ENCODE measurements at regions of chr12 and their contacts with region 1.

Region 1: DNA sequence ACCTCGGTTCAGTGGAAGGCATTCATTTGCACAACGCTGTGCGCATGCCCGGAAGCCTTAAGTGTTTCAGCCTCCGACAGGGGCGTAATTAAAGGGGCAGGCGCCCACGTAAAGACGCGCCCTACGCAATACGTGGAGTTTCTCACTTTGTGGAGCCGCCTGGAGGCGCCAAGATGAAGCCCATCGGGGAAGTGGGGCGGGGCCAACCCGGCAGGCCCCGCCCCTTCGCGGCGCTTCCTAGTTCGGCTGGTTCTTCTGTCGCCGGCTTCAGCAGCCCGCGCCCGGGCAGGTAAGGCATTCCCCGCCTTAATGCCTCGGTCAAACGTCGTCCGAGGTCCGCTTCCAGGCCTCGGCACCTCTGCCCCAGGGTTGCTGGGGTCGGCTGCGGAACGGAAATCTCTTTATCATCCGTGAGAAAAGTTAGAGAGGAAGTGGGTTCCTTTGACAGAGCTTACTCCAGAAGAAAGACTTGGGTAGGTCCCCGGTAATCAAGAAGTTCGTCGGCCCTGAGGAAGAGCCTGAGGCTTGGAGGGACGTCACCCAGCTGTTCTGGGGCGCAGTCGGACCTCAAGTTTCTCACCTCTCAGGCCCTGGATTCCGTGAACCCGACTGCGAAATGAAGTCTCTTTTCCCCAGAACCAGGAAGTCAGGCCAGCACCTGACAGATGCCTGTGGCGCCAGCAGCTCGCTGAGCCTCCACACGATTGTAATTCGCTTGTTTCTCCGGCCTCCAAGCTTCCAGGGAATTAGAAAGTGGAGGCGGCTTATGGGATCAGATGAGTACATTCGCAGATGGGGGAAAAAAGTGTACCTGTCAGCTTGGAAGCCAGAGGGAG is at the starts of genes IRAK4 and PUS7L:
- DNase-seq: peak; percentile 97
- ATAC-seq: peak; percentile 96
- H3K4me3 Mint-ChIP-seq: peak within 1 kb of the TSS; percentile 97
- H3K27ac Mint-ChIP-seq: peak within 1 kb of the TSS; percentile 99
- H3K4me1 Mint-ChIP-seq: peaks cover 64% of the 10 kb centered on the region
- H3K27me3 Mint-ChIP-seq: no peaks in the 10 kb centered on the region
- total RNA-seq, gene IRAK4: 32.9 to 37.7 TPM
- total RNA-seq, gene PUS7L: 16.8 to 19.8 TPM

Region 2: GRCh38 chr12:43805860-43806736 is 47.2 kb after region 1 on chr12 and contains the start of gene TWF1:
- CTCF ChIA-PET with region 1: interaction called, 26 read pairs
- POLR2A ChIA-PET with region 1: interaction called, 42 read pairs
- DNase-seq: peak; percentile 90
- ATAC-seq: peak; percentile 95
- H3K4me3 Mint-ChIP-seq: peak within 1 kb of the TSS; percentile 98
- H3K27ac Mint-ChIP-seq: peak within 1 kb of the TSS; percentile 100
- H3K4me1 Mint-ChIP-seq: peaks cover 38% of the 10 kb centered on the region
- H3K27me3 Mint-ChIP-seq: no peaks in the 10 kb centered on the region
- total RNA-seq, gene TWF1: 24.1 to 25.9 TPM